ENCODE measurements at regions of chr10 and their contacts with region 1.

Region 1: GRCh38 chr10:91856637-91857036 is 52.6 kb downstream of the FGFBP3 start:
- DNase-seq: no peak
- ATAC-seq: no peak
- H3K4me3 ChIP-seq: no peak overlapping the region
- H3K27ac ChIP-seq: no peak overlapping the region
- H3K4me1 ChIP-seq: no peaks in the 10 kb centered on the region
- H3K27me3 ChIP-seq: no peaks in the 10 kb centered on the region
- CTCF ChIP-seq: no peak; the same call in 1 of the 2 replicates
- POLR2A ChIP-seq: no peak
- RAD21 ChIP-seq: peak; percentile 23; the same call in 1 of the 2 replicates

Region 2: GRCh38 chr10:91838199-91838598 is 18.4 kb before region 1 on chr10:
- CTCF ChIA-PET with region 1: no interaction called
- POLR2A ChIA-PET with region 1: interaction called, 5 read pairs
- dilution Hi-C with region 1: no loop called
- in situ Hi-C with region 1: no loop called
- intact Hi-C with region 1: loop called (anchors 2 kb)
- DNase-seq: no peak
- ATAC-seq: no peak
- H3K4me3 ChIP-seq: no peak overlapping the region
- H3K27ac ChIP-seq: no peak overlapping the region
- H3K4me1 ChIP-seq: no peaks in the 10 kb centered on the region
- H3K27me3 ChIP-seq: no peaks in the 10 kb centered on the region
- CTCF ChIP-seq: no peak
- POLR2A ChIP-seq: no peak
- RAD21 ChIP-seq: no peak

Region 3: GRCh38 chr10:91941426-91941825 is 84.8 kb after region 1 on chr10:
- CTCF ChIA-PET with region 1: no interaction called
- POLR2A ChIA-PET with region 1: no interaction called
- dilution Hi-C with region 1: no loop called
- in situ Hi-C with region 1: no loop called
- intact Hi-C with region 1: no loop called
- DNase-seq: no peak
- ATAC-seq: no peak
- H3K4me3 ChIP-seq: no peak overlapping the region
- H3K27ac ChIP-seq: no peak overlapping the region
- H3K4me1 ChIP-seq: peaks cover 4% of the 10 kb centered on the region
- H3K27me3 ChIP-seq: no peaks in the 10 kb centered on the region
- CTCF ChIP-seq: no peak
- POLR2A ChIP-seq: no peak
- RAD21 ChIP-seq: no peak

Measured in IMR-90 (cell line).